Right cardiac atrium (tissue), 5 donors: ENCODE measurements at regions of chr21 and their contacts with region 1.

Region 1: DNA sequence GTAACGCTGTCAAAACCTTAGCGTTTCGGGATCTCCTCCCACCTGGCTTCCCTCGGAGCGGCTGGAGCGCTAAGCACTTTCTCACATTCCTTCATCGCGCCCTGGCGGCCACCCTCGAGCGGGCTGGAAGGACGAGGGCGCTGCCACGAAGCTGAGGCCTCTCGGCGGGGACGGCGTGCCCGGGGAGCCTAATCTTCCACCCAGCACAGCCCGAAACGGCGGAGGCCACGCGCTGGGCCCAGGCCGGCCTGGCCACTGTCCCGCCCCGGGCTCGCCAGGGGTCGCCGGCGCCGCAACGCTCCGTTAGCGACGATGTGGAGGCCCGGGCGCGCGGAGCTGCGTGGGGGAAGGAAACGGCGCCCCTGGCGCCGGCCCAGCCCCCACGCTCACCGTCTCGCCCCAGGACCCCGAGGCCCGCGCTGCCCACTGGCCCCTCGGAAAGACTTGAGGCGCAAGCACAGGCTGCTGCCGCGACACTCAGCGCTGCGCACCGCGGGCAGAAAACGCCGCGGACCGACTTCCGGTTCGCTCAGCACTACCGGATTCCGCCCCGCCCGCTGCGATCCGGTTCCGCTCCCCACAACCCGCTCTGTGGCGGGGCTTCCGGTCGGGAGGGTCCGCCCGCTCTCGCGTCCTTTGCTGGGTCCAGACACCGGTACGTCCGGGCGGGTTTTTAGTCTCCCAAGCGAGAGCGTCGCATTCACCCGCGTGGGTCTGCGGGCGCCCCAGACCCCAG is at the start of gene YBEY:
- DNase-seq: peak; percentile 92 to 96 (median 96)
- ATAC-seq: peak; percentile 97
- H3K4me3 ChIP-seq: peak within 1 kb of the TSS; percentile 80
- H3K27ac ChIP-seq: peak within 1 kb of the TSS; percentile 77
- H3K4me1 ChIP-seq: peaks cover 4% of the 10 kb centered on the region
- H3K27me3 ChIP-seq: no peaks in the 10 kb centered on the region
- total RNA-seq, gene YBEY: 13.9 to 18.5 (median 16.4) TPM

Region 2: GRCh38 chr21:45973659-45974072 is 312.3 kb before region 1 on chr21:
- intact Hi-C with region 1: loop called in 1 of 4 experiments (anchors 10 kb)
- DNase-seq: peak; percentile 90 to 95 (median 94)
- ATAC-seq: peak; percentile 56 to 57
- H3K4me3 ChIP-seq: peak overlapping the region; percentile 57
- H3K27ac ChIP-seq: peak overlapping the region; percentile 92
- H3K4me1 ChIP-seq: peaks cover 5% of the 10 kb centered on the region
- H3K27me3 ChIP-seq: no peaks in the 10 kb centered on the region

Region 3: DNA sequence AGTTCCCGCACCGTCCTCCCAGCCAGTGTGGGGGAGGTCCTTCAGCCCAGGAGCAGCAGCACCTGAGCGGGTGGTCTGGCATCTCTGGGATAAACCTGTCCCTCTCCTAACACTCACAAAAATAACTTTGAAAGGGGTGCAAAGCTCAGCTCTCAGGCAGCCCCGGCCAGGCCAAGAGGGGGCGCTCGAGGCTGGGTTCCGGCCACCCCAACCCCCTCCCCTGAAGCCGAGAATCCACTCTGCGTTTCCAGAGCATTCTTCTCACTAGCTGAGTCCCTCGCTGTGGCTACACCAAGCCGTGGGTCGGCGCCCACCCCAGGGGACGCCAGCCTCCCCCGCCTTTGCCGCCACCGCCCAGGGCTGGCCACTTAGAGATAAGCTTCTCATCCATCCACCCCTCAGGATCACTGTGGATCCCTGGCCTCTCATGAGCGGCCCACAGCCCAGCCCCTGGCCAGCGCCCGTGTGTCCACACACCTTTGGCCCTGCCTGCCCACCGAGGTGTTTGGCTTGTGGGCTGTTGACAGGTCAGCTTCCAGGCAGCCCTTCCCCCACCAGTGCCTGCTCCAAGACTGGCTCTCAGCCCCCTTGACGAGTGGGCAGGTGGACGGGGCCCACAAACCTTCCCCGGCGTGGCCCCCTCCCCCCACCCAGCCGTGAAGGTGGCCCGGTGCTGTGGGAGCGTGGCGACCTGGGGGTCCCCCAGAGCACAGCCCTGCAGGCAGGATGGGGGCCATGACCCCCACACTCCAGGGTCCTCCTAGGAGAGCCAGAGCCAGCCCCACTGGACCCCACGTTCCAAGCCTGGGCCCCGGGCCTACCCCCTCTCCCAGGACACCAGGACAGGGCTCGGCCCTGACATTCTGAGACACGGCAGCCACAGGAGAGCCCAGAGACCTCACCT is 132.4 kb before region 1 on chr21:
- intact Hi-C with region 1: loop called in 1 of 4 experiments (anchors 10 kb)
- DNase-seq: peak; percentile 57 to 87 (median 84)
- ATAC-seq: peak; percentile 51 to 59
- H3K4me3 ChIP-seq: no peak overlapping the region
- H3K27ac ChIP-seq: no peak overlapping the region
- H3K4me1 ChIP-seq: peaks cover 4% of the 10 kb centered on the region
- H3K27me3 ChIP-seq: no peaks in the 10 kb centered on the region

Region 4: DNA sequence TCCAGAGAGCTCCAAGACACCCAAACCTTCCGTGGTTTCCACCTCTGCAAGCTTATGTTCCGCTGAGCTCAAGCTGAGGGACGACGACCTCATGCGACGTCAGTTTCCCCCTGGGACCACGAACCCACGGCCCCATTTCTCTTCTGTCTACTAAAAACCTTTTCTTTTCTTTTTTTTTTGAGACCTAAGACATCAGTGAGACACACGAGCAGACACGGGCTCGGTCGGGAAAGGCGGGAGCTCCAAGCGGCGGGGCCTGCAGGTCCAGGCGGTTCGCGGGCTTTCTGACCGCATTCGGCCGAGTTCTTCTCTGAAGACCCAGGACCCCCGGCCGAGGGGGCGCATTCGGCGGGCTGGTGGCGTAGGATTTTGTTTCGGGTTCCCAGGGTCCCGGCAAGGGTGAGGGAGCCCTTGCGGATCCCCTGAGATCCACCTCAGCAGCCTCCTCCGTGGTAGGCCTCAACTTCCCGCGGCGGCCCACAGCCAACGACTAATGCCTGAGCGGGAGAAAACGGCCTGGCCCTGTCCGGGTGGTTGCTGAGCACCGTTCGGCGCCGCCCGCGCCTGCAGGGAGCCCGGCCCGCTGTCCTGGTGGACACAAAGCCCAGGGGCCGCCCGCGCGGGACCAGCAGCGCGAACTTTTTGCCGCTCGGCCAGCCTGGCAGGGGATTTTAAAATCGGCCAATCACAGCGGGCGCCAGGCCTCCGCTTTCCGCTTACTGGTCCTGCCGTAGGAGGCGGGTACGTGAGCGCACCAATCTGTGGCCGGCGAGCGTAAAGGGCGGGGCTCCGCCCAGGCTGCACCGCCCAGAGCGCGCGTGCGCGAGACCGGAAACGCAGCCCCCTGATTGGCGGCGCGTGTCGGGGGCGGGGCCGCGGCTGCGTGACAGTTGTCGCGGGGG is 37.5 kb after region 1 on chr21 and contains the start of gene C21orf58:
- intact Hi-C with region 1: loop called in 1 of 4 experiments (anchors 2 kb)
- DNase-seq: peak; percentile 99
- ATAC-seq: peak; percentile 96 to 97
- H3K4me3 ChIP-seq: peak within 1 kb of the TSS; percentile 93
- H3K27ac ChIP-seq: peak within 1 kb of the TSS; percentile 99
- H3K4me1 ChIP-seq: peaks cover 8% of the 10 kb centered on the region
- H3K27me3 ChIP-seq: no peaks in the 10 kb centered on the region
- total RNA-seq, gene C21orf58: 0.84 to 2.1 (median 1.7) TPM